Activated CD4-positive, alpha-beta memory T cell treated with anti-CD3 and anti-CD28 coated beads for 36 hours (primary cell): ENCODE measurements at regions of chr9 and their contacts with region 1.

Region 1: DNA sequence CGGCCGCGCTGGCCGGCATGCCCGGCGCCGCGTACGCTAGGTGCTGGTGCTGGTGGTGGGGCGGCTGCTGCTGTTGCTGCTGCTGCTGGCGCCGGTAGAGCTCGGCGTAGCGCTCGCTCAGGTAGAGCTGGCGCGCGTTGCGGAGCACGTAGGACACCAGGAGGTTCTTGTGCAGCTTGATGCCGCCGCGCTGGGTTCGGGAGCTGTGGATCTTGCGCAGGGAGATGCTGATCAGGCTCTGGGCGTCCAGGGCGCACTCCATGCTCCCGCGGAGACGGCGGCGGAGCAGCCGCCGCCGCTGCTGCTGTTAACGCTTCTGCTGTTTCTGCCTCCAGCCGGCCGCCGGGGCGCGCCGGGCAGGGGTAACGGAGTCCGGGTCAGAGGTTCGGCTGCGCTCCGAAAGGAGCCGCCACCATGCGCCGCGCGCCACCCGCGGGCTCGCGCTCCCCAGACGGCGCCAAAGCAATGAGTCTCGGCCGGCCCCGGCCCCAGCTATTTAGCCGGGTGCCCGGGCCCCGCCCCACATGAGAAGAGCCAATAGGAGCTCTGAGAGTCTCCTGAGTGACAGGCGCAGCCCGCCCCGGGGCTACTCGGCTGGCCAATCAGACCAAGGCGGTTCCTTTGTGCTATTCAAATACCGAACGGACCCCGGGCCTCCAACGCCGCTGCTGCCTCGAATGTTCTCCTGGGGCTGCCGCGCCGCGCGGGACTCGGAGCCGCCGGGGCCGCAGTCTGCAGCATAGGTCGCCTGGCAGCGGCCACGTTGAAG is at the start of gene IER5L:
- DNase-seq: peak; percentile 94
- H3K4me3 Mint-ChIP-seq: peak within 1 kb of the TSS; percentile 85
- H3K27ac Mint-ChIP-seq: no peak within 1 kb of the TSS
- H3K4me1 Mint-ChIP-seq: peaks cover 3% of the 10 kb centered on the region
- H3K27me3 Mint-ChIP-seq: peaks cover 8% of the 10 kb centered on the region
- total RNA-seq, gene IER5L: 1.3 to 1.5 TPM

Region 2: GRCh38 chr9:128702445-128702948 is 475.5 kb before region 1 on chr9 and contains the start of gene PKN3:
- CTCF ChIA-PET with region 1: no interaction called
- POLR2A ChIA-PET with region 1: no interaction called
- intact Hi-C with region 1: no loop called
- DNase-seq: peak; percentile 91
- H3K4me3 Mint-ChIP-seq: peak within 1 kb of the TSS; percentile 73
- H3K27ac Mint-ChIP-seq: peak within 1 kb of the TSS; percentile 50
- H3K4me1 Mint-ChIP-seq: peaks cover 12% of the 10 kb centered on the region
- H3K27me3 Mint-ChIP-seq: no peaks in the 10 kb centered on the region
- total RNA-seq, gene PKN3: 10.4 to 11.4 TPM

Region 3: GRCh38 chr9:129131300-129132145 is 46.5 kb before region 1 on chr9:
- CTCF ChIA-PET with region 1: interaction called, 18 read pairs
- POLR2A ChIA-PET with region 1: interaction called, 3 read pairs
- intact Hi-C with region 1: no loop called
- DNase-seq: peak; percentile 89
- H3K4me3 Mint-ChIP-seq: no peak overlapping the region
- H3K27ac Mint-ChIP-seq: no peak overlapping the region
- H3K4me1 Mint-ChIP-seq: peaks cover 4% of the 10 kb centered on the region
- H3K27me3 Mint-ChIP-seq: no peaks in the 10 kb centered on the region

Region 4: DNA sequence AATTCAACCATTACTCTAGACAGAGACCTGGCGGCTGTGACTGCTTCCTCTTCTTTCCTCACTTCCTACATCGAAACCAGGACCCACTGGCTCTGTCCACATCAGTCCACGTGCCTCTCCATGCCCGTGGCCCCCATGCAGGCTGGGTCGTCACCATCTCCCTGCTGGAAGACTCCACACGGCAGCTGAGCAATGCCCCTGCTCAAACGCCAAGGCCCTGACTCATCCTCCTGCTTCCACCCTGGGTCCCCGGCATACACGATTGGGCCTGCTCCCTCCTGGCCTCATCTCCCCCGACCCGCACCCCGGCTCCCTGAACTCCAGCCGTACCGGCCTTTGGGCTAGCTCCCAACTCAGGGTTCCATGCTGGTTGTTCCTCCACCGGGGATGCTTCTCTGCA is 67.3 kb after region 1 on chr9:
- CTCF ChIA-PET with region 1: no interaction called
- POLR2A ChIA-PET with region 1: no interaction called
- intact Hi-C with region 1: no loop called
- DNase-seq: no peak
- H3K4me3 Mint-ChIP-seq: no peak overlapping the region
- H3K27ac Mint-ChIP-seq: no peak overlapping the region
- H3K4me1 Mint-ChIP-seq: no peaks in the 10 kb centered on the region
- H3K27me3 Mint-ChIP-seq: peaks cover 3% of the 10 kb centered on the region

Region 5: DNA sequence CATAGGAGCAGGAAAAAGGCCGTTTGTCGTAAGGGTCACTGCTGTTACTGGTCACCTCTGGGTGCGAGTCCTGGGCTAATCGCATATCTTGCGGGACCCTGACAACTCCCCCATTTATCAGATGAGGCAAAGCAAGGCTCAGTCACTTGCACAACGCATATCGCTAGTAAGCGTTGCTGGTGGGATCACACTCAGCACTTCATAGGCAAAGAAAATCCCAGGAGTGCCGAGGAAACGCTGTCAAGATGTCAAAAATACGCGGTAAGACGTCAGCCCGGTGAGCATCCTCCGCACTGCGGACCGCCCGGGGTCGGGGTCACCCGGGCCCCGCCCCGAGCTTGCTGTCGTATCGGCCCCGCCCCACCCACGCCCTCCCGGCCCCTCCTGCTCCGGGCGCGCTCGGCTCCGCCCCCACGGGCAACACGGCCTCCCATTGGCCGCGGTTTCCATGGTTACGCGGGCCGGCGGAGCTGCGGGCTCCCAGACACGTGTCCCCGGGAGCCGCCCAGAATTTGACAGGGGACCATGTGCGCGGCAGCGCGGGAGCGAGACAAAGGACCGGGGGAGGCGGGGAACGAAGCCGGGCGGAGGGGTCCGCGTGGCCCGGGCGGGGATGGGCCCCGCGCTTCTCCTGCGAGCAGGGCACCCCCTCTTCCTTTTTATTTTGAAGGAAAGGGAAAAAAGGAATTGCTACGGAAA is 80.3 kb after region 1 on chr9:
- CTCF ChIA-PET with region 1: interaction called, 3 read pairs
- POLR2A ChIA-PET with region 1: interaction called, 3 read pairs
- intact Hi-C with region 1: loop called (anchors 5 kb)
- DNase-seq: peak; percentile 92
- H3K4me3 Mint-ChIP-seq: peak overlapping the region; percentile 37
- H3K27ac Mint-ChIP-seq: no peak overlapping the region
- H3K4me1 Mint-ChIP-seq: peaks cover 34% of the 10 kb centered on the region
- H3K27me3 Mint-ChIP-seq: peaks cover 11% of the 10 kb centered on the region

Region 6: DNA sequence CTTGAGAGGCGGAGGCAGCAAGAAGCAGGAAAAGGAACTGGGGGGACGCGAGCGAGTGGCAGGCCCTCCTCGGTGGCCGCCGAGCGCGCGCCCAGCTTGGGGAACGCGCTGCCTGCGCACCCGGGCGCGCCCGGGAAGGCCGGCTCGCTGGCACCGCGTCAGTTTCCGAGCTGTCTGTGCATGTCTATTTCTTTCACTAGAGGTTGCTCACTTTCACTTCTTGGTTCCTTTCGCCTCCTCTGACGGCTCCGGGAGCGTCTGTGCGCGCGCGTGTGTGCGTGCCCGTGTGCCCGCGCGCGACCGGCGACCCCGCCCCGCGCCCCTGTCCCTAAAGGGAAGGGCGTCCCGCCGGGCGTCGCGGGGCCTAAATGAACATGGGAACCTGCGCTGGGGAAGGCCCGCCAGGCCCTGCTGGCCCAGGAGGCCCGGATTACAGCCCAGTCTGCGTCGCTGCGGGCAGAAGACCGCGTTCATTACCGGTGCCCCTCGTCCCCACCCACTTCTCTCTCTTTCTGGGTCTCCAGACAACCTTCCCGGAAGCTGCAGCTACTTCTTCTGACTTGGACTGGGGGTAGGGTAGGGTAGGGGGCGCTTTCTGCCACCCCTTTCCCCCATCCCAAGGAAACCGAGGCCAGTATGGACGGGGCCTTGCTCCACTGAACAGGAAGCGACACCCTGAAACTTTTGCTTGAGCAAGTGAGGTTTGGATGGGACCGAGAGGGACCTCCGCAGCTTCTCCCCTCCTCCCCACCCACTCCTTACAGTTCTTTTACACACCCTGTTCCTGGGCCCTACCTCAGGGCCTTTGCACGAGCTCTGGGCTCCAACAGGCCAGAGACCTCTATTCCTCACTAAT is 205.8 kb after region 1 on chr9:
- CTCF ChIA-PET with region 1: no interaction called
- POLR2A ChIA-PET with region 1: no interaction called
- intact Hi-C with region 1: loop called (anchors 10 kb)
- DNase-seq: peak; percentile 74
- H3K4me3 Mint-ChIP-seq: peak overlapping the region; percentile 61
- H3K27ac Mint-ChIP-seq: peak overlapping the region; percentile 23
- H3K4me1 Mint-ChIP-seq: no peaks in the 10 kb centered on the region
- H3K27me3 Mint-ChIP-seq: no peaks in the 10 kb centered on the region

Region 7: GRCh38 chr9:129495534-129496325 is 317.8 kb after region 1 on chr9:
- CTCF ChIA-PET with region 1: interaction called, 20 read pairs
- POLR2A ChIA-PET with region 1: interaction called, 3 read pairs
- intact Hi-C with region 1: no loop called
- DNase-seq: peak; percentile 91
- H3K4me3 Mint-ChIP-seq: peak overlapping the region; percentile 72
- H3K27ac Mint-ChIP-seq: peak overlapping the region; percentile 73
- H3K4me1 Mint-ChIP-seq: peaks cover 42% of the 10 kb centered on the region
- H3K27me3 Mint-ChIP-seq: no peaks in the 10 kb centered on the region

Region 8: GRCh38 chr9:129626079-129626624 is 448.2 kb after region 1 on chr9 and contains the start of gene NTMT1:
- CTCF ChIA-PET with region 1: interaction called, 25 read pairs
- POLR2A ChIA-PET with region 1: interaction called, 6 read pairs
- intact Hi-C with region 1: loop called (anchors 2 kb)
- DNase-seq: peak; percentile 95
- H3K4me3 Mint-ChIP-seq: peak within 1 kb of the TSS; percentile 77
- H3K27ac Mint-ChIP-seq: peak within 1 kb of the TSS; percentile 91
- H3K4me1 Mint-ChIP-seq: peaks cover 58% of the 10 kb centered on the region
- H3K27me3 Mint-ChIP-seq: peaks cover 9% of the 10 kb centered on the region
- total RNA-seq, gene NTMT1: 59.9 to 64.6 TPM